ENCODE measurements at regions of chr1 and their contacts with region 1.

Region 1: DNA sequence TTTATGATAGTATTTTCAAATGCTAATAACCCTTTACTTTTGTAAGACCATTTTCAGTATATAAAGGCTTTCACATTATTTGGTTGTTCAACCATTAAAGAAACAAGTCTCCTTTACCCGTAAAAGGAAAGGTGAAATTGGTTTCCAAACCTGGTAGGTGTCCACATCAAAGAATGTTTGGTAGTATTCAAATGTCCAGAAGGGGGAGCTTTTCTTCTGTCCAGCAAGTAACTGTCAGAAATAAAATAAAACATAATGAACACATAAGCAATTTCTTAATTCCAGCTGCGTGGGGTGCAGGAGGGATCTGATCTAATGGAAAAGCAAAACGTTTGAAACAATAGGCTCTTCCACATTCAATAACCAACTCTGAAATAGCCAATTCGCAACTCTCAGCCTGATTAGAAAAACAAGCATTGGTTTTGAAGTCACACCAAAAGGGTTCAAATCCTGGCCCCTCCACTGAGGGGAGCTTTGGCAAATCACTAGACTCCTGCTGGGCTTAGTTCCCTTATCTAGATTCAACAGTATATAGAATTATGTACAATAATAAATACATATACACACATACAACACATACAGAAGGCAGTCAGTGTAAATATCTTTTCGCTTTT is 11.0 kb downstream of the YIPF1 start:
- DNase-seq: peak; percentile 58
- H3K4me3 ChIP-seq: no peak overlapping the region
- H3K27ac ChIP-seq: no peak overlapping the region
- H3K4me1 ChIP-seq: no peaks in the 10 kb centered on the region
- H3K27me3 ChIP-seq: no peaks in the 10 kb centered on the region
- CTCF ChIP-seq: peak; percentile 43 to 55
- POLR2A ChIP-seq: no peak

Region 2: GRCh38 chr1:53889304-53890298 is 11.0 kb after region 1 on chr1 and contains the start of gene YIPF1:
- CTCF ChIA-PET with region 1: interaction called, 16 read pairs
- POLR2A ChIA-PET with region 1: no interaction called
- dilution Hi-C with region 1: no loop called
- intact Hi-C with region 1: no loop called
- DNase-seq: peak; percentile 88
- H3K4me3 ChIP-seq: peak within 1 kb of the TSS; percentile 36 to 86 (median 67)
- H3K27ac ChIP-seq: no peak within 1 kb of the TSS
- H3K4me1 ChIP-seq: peaks cover 8% of the 10 kb centered on the region
- H3K27me3 ChIP-seq: no peaks in the 10 kb centered on the region
- CTCF ChIP-seq: no peak
- POLR2A ChIP-seq: peak; percentile 78
- total RNA-seq, gene YIPF1: 14.8 TPM in 2 replicates

Region 3: GRCh38 chr1:53953063-53953462 is 74.5 kb after region 1 on chr1:
- CTCF ChIA-PET with region 1: interaction called, 63 read pairs
- POLR2A ChIA-PET with region 1: no interaction called
- dilution Hi-C with region 1: no loop called
- intact Hi-C with region 1: loop called (anchors 1 kb)
- DNase-seq: no peak
- H3K4me3 ChIP-seq: no peak overlapping the region
- H3K27ac ChIP-seq: no peak overlapping the region
- H3K4me1 ChIP-seq: peaks cover 7% of the 10 kb centered on the region
- H3K27me3 ChIP-seq: no peaks in the 10 kb centered on the region
- CTCF ChIP-seq: no peak
- POLR2A ChIP-seq: no peak

Region 4: DNA sequence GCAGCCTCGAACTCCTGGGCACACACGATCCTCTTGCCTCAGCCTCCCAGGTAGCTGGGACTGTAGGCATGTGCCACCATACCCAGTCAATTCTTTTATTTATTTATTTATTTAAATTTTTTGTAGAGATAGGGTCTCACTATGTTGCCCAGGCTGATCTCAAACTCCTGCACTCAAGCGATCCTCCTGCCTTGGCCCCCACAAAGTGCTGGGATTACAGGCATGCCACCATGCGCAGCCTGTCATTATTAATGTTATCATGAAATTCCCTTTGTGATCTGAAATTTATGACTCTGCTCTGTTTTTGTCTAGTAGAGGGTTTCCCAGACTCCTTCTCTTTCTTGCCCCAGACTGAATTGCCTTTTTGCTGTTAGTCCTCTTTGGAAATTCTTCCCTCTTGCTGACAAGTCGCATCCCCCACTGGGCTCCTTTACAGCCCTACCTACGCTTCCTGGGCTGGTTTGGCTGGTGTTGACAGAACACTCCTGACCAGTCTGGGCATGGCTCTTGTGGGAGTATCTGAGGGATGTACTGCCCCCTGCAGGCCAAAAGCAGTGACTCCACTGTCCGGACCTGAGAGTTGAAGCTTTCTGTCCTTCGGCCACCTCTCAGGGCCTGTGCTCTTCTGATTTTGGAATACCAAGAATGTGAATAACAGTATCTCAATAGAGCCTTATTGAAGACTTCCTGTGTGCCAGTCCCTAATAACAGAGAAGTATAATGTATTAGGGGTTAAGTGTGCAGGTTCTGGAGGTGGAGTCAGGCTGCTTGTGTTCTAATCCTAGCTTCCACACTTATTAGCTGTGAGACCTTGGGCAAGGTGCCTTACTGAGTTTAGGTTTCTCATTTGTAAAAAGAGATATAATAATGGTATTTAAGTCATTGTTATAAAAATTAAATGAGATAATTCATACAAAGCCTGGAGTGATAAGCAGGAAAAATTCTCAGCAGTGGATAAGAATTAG is 203.0 kb after region 1 on chr1:
- CTCF ChIA-PET with region 1: interaction called, 12 read pairs
- POLR2A ChIA-PET with region 1: no interaction called
- dilution Hi-C with region 1: no loop called
- intact Hi-C with region 1: no loop called
- DNase-seq: peak; percentile 59
- H3K4me3 ChIP-seq: no peak overlapping the region
- H3K27ac ChIP-seq: no peak overlapping the region
- H3K4me1 ChIP-seq: no peaks in the 10 kb centered on the region
- H3K27me3 ChIP-seq: no peaks in the 10 kb centered on the region
- CTCF ChIP-seq: peak; percentile 85 to 92
- POLR2A ChIP-seq: no peak